Naive thymus-derived CD4-positive, alpha-beta T cell (primary cell): ENCODE measurements at regions of chr22 and their contacts with region 1.

Region 1: DNA sequence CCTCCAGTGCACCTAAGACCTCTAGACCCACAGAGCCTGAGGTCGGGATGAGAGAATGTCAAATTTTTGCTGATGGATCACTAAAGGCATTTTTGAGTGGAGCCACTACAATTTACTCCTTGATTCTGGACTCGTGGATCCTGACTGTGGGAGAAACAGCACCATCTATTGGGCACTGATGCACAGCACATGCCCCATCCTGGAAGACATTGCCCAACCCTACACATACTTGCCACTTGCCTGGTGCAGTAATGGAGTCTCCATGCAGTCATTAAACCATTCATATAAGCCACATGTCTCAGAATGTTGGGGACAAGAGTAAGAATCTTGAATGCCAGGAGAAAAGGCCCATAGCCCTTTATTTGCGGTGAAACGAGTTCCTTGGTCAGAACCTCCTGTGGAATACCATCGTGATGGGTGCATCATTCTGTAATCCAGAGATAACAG is 103.9 kb downstream of the GGTLC2 start:
- DNase-seq: peak in 6 of 9 donors; percentile 17 to 34 (median 26)
- ATAC-seq: peak; percentile 78
- H3K4me3 ChIP-seq: no peak overlapping the region
- H3K4me3 Mint-ChIP-seq: no peak overlapping the region
- H3K27ac ChIP-seq: no peak overlapping the region
- H3K27ac Mint-ChIP-seq: peak overlapping the region in 2 of 9 donors; percentile 21 to 34
- H3K4me1 ChIP-seq: peaks cover 6 to 30% of the 10 kb centered on the region in 2 donors
- H3K4me1 Mint-ChIP-seq: peaks cover 2 to 23% (median 15%) of the 10 kb centered on the region in 7 donors
- H3K27me3 ChIP-seq: no peaks in the 10 kb centered on the region
- H3K27me3 Mint-ChIP-seq: peaks cover 0 to 19% (median 4%) of the 10 kb centered on the region in 5 donors

Region 2: DNA sequence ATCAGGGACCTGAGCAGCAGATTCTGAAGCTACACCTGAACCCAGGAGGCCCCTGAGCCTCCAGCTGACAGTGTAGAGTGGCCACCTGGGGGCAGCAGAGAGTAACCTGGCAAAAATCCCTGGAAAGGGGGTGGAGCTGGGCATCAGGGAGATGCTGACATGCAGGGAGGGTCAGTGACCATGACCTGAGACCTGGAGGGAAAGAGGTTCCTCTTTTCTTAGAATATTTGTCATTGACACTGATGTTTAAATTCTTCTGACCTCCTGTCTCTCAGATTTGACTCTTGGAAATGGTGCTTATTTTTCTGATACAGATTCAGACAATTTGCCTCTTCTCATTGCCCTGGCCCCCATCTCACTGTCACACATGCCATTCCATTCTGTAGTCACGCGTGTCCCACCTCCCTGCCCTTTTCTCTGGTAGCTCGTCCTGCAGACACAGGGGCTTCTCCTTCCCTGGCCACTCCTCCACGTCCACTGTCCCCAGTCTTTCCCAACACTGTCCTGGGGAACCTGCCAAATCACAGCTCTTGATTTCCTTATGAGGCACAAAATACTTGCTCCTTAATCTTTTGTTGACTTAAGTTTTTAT is 22.1 kb after region 1 on chr22:
- CTCF ChIA-PET with region 1: interaction called, 29 read pairs
- POLR2A ChIA-PET with region 1: no interaction called
- intact Hi-C with region 1: no loop called
- DNase-seq: peak in 7 of 9 donors; percentile 9 to 52 (median 28)
- ATAC-seq: peak; percentile 75
- H3K4me3 ChIP-seq: no peak overlapping the region
- H3K4me3 Mint-ChIP-seq: no peak overlapping the region
- H3K27ac ChIP-seq: no peak overlapping the region
- H3K27ac Mint-ChIP-seq: peak overlapping the region in 1 of 9 donors; percentile 18
- H3K4me1 ChIP-seq: peaks cover 0 to 49% of the 10 kb centered on the region in 2 donors
- H3K4me1 Mint-ChIP-seq: peaks cover 0 to 6% (median 0%) of the 10 kb centered on the region in 7 donors
- H3K27me3 ChIP-seq: no peaks in the 10 kb centered on the region
- H3K27me3 Mint-ChIP-seq: peaks cover 5 to 26% (median 11%) of the 10 kb centered on the region in 5 donors

Region 3: GRCh38 chr22:23478201-23478600 is 729.9 kb after region 1 on chr22:
- CTCF ChIA-PET with region 1: no interaction called
- POLR2A ChIA-PET with region 1: no interaction called
- intact Hi-C with region 1: no loop called
- DNase-seq: no peak
- ATAC-seq: no peak
- H3K4me3 ChIP-seq: no peak overlapping the region
- H3K4me3 Mint-ChIP-seq: no peak overlapping the region
- H3K27ac ChIP-seq: no peak overlapping the region
- H3K27ac Mint-ChIP-seq: no peak overlapping the region
- H3K4me1 ChIP-seq: no peaks in the 10 kb centered on the region
- H3K4me1 Mint-ChIP-seq: peaks cover 0 to 4% (median 3%) of the 10 kb centered on the region in 7 donors
- H3K27me3 ChIP-seq: no peaks in the 10 kb centered on the region
- H3K27me3 Mint-ChIP-seq: peaks cover 5 to 23% (median 9%) of the 10 kb centered on the region in 5 donors